ENCODE measurements at regions of chr12 and their contacts with region 1.

Region 1: DNA sequence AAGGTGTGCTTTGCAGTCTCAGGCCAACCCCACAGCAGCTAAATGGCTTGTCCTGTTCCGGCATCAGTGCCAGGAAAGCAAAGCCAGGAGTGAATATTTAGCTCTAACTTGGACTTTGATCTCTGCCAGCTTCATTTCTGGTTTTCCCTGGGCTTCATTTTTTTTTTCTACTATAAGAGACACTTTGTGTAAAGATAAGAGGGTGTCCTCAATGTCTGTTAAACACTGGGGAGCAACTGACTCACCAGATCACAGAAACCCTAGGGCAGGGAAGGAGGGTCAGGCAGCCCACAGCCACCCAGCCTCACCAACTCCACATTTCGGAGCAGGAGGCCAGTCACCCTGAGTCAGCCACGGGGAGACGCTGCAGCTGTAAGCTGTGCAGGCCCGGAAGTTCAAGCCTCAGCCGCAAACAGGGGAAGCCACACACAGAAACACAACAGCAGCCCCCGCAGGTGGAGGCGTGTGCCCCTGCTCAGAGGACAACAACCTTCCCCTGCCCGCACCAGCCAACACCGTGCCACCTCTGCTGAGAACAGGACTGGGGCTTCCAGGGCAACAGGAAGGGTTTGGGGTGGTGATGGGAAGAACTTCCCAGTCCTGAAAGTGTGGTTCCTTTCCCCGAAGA is 6.3 kb downstream of the TNFRSF1A start:
- DNase-seq: peak; percentile 90
- ATAC-seq: peak; percentile 74
- H3K4me3 ChIP-seq: peak overlapping the region; percentile 29 to 99 (median 41); a peak in 5 of 6 replicates
- H3K27ac ChIP-seq: peak overlapping the region; percentile 97
- H3K4me1 ChIP-seq: peaks cover 62% of the 10 kb centered on the region
- H3K27me3 ChIP-seq: no peaks in the 10 kb centered on the region; a peak in 1 of 5 replicates
- CTCF ChIP-seq: peak; percentile 92
- EP300 ChIP-seq: peak in 1 of 2 experiments; percentile 5; a peak in 1 of 4 replicates
- POLR2A ChIP-seq: no peak; a peak in 2 of 4 replicates
- RAD21 ChIP-seq: peak; percentile 84

Region 2: GRCh38 chr12:6125310-6125608 is 210.3 kb before region 1 on chr12:
- CTCF ChIA-PET with region 1: no interaction called
- POLR2A ChIA-PET with region 1: no interaction called
- in situ Hi-C with region 1: no loop called
- intact Hi-C with region 1: no loop called
- DNase-seq: no peak
- ATAC-seq: no peak
- H3K4me3 ChIP-seq: no peak overlapping the region
- H3K27ac ChIP-seq: no peak overlapping the region
- H3K4me1 ChIP-seq: no peaks in the 10 kb centered on the region
- H3K27me3 ChIP-seq: peaks cover 0 to 33% of the 10 kb centered on the region in 2 experiments; a peak in 4 of 5 replicates
- CTCF ChIP-seq: no peak
- EP300 ChIP-seq: no peak
- POLR2A ChIP-seq: no peak
- RAD21 ChIP-seq: no peak

Region 3: GRCh38 chr12:6278439-6279255 is 56.9 kb before region 1 on chr12:
- CTCF ChIA-PET with region 1: no interaction called
- POLR2A ChIA-PET with region 1: interaction called, 10 read pairs
- in situ Hi-C with region 1: no loop called
- intact Hi-C with region 1: no loop called
- DNase-seq: peak; percentile 69
- ATAC-seq: peak; percentile 86
- H3K4me3 ChIP-seq: peak overlapping the region; percentile 51 to 71 (median 52); a peak in 5 of 6 replicates
- H3K27ac ChIP-seq: peak overlapping the region; percentile 75
- H3K4me1 ChIP-seq: peaks cover 85% of the 10 kb centered on the region
- H3K27me3 ChIP-seq: peaks cover 0 to 17% of the 10 kb centered on the region in 2 experiments; a peak in 4 of 5 replicates
- CTCF ChIP-seq: peak; percentile 73
- EP300 ChIP-seq: peak in 1 of 2 experiments; percentile 35; a peak in 2 of 4 replicates
- POLR2A ChIP-seq: peak in 1 of 2 experiments; percentile 51; a peak in 2 of 4 replicates
- RAD21 ChIP-seq: peak; percentile 99

Region 4: DNA sequence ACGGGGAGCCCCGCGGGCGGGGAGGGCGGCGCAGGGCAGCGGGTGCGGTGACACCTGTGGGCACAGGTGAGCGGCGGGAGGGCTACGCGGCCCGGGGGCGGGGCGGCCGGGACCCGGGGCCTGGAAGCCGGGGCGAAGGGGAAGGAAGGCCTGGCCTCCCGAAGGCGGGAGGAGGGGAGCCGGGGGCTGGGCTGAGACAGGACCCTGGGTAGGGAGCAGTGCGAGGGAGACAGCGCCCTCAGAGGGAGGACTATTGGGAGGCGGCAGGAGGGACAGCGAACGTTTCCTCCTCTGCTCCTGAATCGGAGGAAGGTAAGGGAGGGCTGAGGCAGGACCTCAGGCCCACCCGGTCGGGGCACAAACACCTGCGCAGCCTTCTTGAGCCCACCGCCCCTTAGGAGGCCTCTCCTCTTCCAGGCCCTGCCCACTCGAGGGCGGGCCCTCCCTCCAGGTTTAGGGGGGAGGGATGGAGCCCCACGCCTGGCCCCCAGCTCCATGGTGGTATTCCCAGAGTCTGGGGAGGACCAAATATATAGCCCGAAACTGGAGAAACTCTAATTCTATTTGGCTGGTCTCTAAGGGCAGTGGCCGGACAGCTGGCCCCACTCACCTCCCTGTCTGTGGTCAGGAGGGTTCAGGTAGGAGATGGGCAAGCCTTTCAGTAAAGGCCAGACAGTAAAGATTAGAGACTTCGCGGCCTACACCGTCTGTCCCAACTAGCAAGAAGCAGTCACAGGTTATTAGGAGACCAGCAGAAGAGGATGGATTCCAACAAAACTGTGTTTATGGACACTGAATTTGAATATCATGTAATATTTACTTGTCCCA is 24.6 kb before region 1 on chr12:
- CTCF ChIA-PET with region 1: no interaction called
- POLR2A ChIA-PET with region 1: interaction called, 53 read pairs
- in situ Hi-C with region 1: no loop called
- intact Hi-C with region 1: no loop called
- DNase-seq: no peak
- ATAC-seq: peak; percentile 9
- H3K4me3 ChIP-seq: peak overlapping the region; percentile 60 to 82 (median 75)
- H3K27ac ChIP-seq: peak overlapping the region; percentile 97
- H3K4me1 ChIP-seq: peaks cover 57% of the 10 kb centered on the region
- H3K27me3 ChIP-seq: peaks cover 0 to 4% of the 10 kb centered on the region in 2 experiments; a peak in 1 of 5 replicates
- CTCF ChIP-seq: peak; percentile 27; the same call in 1 of the 2 replicates
- EP300 ChIP-seq: no peak
- POLR2A ChIP-seq: no peak
- RAD21 ChIP-seq: no peak

Region 5: DNA sequence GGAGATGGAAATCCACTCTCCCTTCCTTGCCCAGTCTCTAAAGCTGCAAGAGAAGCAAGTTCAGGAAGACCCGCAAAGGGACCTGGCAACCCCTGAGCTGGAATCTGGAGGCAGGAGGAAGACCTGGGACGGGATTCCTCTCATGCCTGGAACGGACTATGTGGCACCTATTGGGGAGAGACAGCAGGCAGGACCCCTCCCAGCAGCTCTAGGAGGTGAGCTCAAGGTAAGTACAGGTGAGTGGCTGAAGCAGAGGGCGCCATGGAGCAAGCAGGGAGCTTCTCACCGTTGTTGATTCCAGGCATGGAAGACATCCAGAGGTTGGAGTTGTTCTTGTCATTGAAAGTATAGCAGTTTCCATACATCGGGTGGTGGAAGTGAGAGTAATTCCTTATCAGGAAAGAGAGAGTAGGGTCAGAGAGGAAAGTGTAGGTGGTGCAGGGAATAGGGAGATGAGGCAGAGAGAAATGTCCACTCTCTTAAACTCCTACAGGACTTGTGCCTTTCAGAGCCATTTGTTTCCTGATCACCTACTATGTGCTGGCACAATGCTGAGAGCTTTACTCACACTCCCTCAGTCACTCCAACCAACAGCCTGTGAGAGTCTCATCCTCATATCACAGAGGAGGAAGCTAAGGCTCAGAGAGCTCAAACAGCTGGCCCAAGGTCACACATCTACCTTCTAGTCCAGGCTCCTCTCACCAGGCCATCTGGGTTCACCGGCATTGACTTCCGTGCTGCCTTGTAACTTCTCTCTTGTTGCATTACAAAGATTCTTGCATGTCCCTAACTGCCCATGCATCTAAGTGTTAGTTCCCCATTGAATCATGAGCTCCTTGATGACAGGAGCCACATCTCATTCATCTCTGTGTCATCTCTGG is 20.2 kb after region 1 on chr12:
- CTCF ChIA-PET with region 1: no interaction called
- POLR2A ChIA-PET with region 1: interaction called, 42 read pairs
- in situ Hi-C with region 1: no loop called
- intact Hi-C with region 1: no loop called
- DNase-seq: no peak
- ATAC-seq: peak; percentile 52
- H3K4me3 ChIP-seq: no peak overlapping the region
- H3K27ac ChIP-seq: no peak overlapping the region
- H3K4me1 ChIP-seq: peaks cover 54% of the 10 kb centered on the region
- H3K27me3 ChIP-seq: no peaks in the 10 kb centered on the region
- CTCF ChIP-seq: peak; percentile 56
- EP300 ChIP-seq: no peak
- POLR2A ChIP-seq: no peak
- RAD21 ChIP-seq: no peak

Region 6: DNA sequence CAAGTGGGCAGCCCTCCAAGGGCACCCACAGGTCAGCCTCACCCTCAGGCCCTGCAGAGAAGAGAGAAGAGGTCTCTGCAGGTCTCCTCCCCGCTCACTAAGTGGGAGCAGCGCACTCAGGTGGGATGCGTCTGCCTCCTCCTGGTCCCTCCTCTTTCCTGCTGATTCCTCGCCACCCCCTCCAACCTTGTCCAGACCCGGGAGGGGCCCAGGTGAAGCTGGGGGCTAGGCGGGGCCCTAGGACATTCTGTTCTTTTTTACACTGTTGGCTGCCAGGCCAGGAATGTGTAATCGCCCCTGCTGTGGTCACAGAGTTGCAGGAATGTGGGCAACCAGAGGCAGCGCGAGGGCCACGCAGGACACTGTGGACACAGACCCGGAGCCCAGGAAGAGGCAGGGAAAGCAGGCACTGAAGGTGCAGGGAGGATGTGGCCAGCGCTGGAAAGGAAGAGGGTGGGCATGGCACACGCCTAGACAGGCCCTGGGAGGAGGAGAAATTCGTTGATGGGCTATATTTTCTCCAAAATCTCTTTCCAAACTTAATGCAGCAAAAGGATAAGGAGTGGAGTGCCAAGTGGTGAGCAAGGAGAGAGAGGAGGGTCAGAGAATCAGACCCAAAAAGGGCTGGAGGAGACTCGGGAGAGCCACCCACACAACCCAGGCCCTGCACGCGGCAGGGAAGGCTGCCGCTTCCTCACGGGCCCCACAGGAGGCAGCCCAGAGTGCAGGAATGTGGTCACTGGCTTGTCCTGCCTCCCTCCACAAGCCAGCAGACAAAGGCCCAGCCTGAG is 40.7 kb after region 1 on chr12:
- CTCF ChIA-PET with region 1: interaction called, 4 read pairs
- POLR2A ChIA-PET with region 1: interaction called, 278 read pairs
- in situ Hi-C with region 1: loop called (anchors 5 kb)
- intact Hi-C with region 1: loop called (anchors 2 kb)
- DNase-seq: peak; percentile 64
- ATAC-seq: peak; percentile 85
- H3K4me3 ChIP-seq: peak overlapping the region; percentile 41 to 73 (median 57)
- H3K27ac ChIP-seq: peak overlapping the region; percentile 16
- H3K4me1 ChIP-seq: peaks cover 73% of the 10 kb centered on the region
- H3K27me3 ChIP-seq: peaks cover 0 to 21% of the 10 kb centered on the region in 2 experiments; a peak in 3 of 5 replicates
- CTCF ChIP-seq: peak; percentile 66
- EP300 ChIP-seq: no peak
- POLR2A ChIP-seq: peak in 1 of 2 experiments; percentile 53; a peak in 2 of 4 replicates
- RAD21 ChIP-seq: peak; percentile 34; the same call in 1 of the 2 replicates

Region 7: DNA sequence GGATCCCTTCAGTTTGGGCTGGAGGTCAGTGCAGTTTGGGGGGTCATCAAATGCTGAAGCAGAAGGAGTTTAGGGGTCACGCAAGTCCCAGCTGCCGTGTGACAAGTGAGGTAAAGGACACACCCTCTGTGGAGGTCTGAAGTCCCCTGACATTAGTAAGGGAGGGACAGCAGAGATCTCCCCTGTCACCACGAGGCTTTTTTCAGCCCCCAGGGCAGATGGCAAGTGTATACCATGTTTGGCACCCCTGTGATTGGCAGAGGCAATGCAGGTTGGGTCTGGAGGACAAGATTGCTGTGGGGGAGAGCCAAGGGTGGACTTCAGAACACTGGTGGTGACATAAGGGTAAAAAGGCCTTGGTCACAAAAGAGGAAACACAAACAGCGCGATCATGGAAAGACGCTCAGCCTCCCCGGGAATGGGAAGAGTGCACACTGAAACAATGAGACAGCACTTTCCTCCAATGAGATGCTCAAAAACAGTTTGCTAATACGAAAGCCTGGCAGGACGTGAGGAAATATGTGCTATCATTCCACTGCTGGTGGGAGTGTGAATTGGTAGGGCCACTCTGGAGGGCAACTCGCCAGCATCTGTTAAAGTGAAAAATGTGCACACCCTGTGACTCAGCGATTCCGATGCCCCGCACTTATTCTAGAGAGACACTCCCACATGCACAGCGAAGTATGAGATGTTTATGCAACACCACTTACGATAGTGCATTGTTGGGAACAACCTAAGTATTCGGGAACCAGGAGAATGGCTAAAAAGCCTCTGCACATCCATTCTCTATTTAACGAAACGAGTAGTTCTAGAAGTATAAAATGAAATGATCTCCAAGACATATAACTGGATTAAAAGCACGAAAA is 94.8 kb after region 1 on chr12:
- CTCF ChIA-PET with region 1: no interaction called
- POLR2A ChIA-PET with region 1: no interaction called
- in situ Hi-C with region 1: no loop called
- intact Hi-C with region 1: no loop called
- DNase-seq: peak; percentile 72
- ATAC-seq: peak; percentile 67
- H3K4me3 ChIP-seq: peak overlapping the region; percentile 15 to 60 (median 40)
- H3K27ac ChIP-seq: peak overlapping the region; percentile 7
- H3K4me1 ChIP-seq: peaks cover 44% of the 10 kb centered on the region
- H3K27me3 ChIP-seq: peaks cover 0 to 12% of the 10 kb centered on the region in 2 experiments; a peak in 1 of 5 replicates
- CTCF ChIP-seq: no peak
- EP300 ChIP-seq: no peak
- POLR2A ChIP-seq: no peak
- RAD21 ChIP-seq: no peak

Region 8: GRCh38 chr12:6451348-6452244 is 116.0 kb after region 1 on chr12 and contains the start of gene TAPBPL:
- CTCF ChIA-PET with region 1: no interaction called
- POLR2A ChIA-PET with region 1: interaction called, 22 read pairs
- in situ Hi-C with region 1: no loop called
- intact Hi-C with region 1: no loop called
- DNase-seq: peak; percentile 89
- ATAC-seq: peak; percentile 94
- H3K4me3 ChIP-seq: peak within 1 kb of the TSS; percentile 87 to 94 (median 90)
- H3K27ac ChIP-seq: peak within 1 kb of the TSS; percentile 90
- H3K4me1 ChIP-seq: peaks cover 34% of the 10 kb centered on the region
- H3K27me3 ChIP-seq: no peaks in the 10 kb centered on the region; a peak in 1 of 5 replicates
- CTCF ChIP-seq: no peak
- EP300 ChIP-seq: no peak
- POLR2A ChIP-seq: peak; percentile 68 to 79
- RAD21 ChIP-seq: no peak
- total RNA-seq, gene TAPBPL: 3.2 and 10.0 TPM in 2 replicates

Region 9: DNA sequence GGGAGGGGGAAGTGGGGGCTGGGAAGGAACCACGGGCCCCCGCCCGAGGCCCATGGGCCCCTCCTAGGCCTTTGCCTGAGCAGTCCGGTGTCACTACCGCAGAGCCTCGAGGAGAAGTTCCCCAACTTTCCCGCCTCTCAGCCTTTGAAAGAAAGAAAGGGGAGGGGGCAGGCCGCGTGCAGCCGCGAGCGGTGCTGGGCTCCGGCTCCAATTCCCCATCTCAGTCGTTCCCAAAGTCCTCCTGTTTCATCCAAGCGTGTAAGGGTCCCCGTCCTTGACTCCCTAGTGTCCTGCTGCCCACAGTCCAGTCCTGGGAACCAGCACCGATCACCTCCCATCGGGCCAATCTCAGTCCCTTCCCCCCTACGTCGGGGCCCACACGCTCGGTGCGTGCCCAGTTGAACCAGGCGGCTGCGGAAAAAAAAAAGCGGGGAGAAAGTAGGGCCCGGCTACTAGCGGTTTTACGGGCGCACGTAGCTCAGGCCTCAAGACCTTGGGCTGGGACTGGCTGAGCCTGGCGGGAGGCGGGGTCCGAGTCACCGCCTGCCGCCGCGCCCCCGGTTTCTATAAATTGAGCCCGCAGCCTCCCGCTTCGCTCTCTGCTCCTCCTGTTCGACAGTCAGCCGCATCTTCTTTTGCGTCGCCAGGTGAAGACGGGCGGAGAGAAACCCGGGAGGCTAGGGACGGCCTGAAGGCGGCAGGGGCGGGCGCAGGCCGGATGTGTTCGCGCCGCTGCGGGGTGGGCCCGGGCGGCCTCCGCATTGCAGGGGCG is 198.5 kb after region 1 on chr12 and contains the start of gene GAPDH:
- CTCF ChIA-PET with region 1: no interaction called
- POLR2A ChIA-PET with region 1: interaction called, 27 read pairs
- in situ Hi-C with region 1: no loop called
- intact Hi-C with region 1: loop called (anchors 10 kb)
- DNase-seq: peak; percentile 95
- ATAC-seq: peak; percentile 69
- H3K4me3 ChIP-seq: peak within 1 kb of the TSS; percentile 94 to 99 (median 97)
- H3K27ac ChIP-seq: peak within 1 kb of the TSS; percentile 97
- H3K4me1 ChIP-seq: peaks cover 53% of the 10 kb centered on the region
- H3K27me3 ChIP-seq: no peaks in the 10 kb centered on the region; a peak in 1 of 5 replicates
- CTCF ChIP-seq: no peak
- EP300 ChIP-seq: peak; percentile 14 to 26; a peak in 2 of 4 replicates
- POLR2A ChIP-seq: peak in 1 of 2 experiments; percentile 98; a peak in 2 of 4 replicates
- RAD21 ChIP-seq: no peak
- total RNA-seq, gene GAPDH: 3,038 and 4,052 TPM in 2 replicates

Measured in HepG2 (cell line).